ENCODE measurements at regions of chr2 and their contacts with region 1.

Region 1: DNA sequence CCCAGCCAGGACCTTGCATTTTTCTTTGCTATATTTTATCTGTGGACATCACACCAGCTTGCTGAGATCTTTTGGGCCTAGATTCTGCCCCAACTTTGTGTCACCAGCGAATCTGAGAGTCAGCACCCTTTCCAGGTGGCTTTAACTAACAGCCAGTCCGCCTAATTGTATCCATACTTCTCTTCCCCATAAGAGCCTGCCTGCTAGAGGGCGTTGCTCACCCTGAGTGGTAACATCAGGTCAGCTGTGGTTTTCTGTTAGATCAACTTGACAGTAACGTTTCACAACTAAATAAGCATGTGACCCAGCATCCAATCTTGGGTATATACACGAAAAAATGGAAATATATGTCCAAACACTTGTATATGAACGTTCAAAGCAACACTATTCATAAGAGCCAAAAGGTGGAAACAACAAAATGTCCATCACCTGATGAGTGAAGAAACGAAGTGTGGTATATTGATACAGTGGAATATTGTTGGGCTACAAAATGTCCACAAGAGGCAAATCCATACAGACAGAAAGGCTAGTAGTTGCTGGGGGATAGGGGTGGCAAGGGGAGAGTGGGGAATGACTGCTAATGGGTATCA is 24.9 kb downstream of the EFHD1 start:
- DNase-seq: no peak
- ATAC-seq: no peak
- H3K4me3 ChIP-seq: no peak overlapping the region
- H3K27ac ChIP-seq: 0 out of 2 replicates have a peak overlapping the region, but pooled peaks have one; percentile 46
- H3K4me1 ChIP-seq: peaks cover 22% of the 10 kb centered on the region
- H3K27me3 ChIP-seq: no peaks in the 10 kb centered on the region
- CTCF ChIP-seq: no peak

Region 2: GRCh38 chr2:232567721-232568120 is 90.6 kb before region 1 on chr2:
- CTCF ChIA-PET with region 1: no interaction called
- POLR2A ChIA-PET with region 1: interaction called, 14 read pairs
- in situ Hi-C with region 1: no loop called
- intact Hi-C with region 1: no loop called
- DNase-seq: no peak
- ATAC-seq: peak; percentile 43; the same call in 1 of the 2 replicates
- H3K4me3 ChIP-seq: no peak overlapping the region
- H3K27ac ChIP-seq: no peak overlapping the region
- H3K4me1 ChIP-seq: no peaks in the 10 kb centered on the region
- H3K27me3 ChIP-seq: no peaks in the 10 kb centered on the region
- CTCF ChIP-seq: no peak

Region 3: GRCh38 chr2:232632908-232633732 is 25.2 kb before region 1 on chr2 and contains the start of gene EFHD1:
- CTCF ChIA-PET with region 1: no interaction called
- POLR2A ChIA-PET with region 1: interaction called, 15 read pairs
- in situ Hi-C with region 1: no loop called
- intact Hi-C with region 1: no loop called
- DNase-seq: no peak
- ATAC-seq: peak; percentile 97
- H3K4me3 ChIP-seq: peak within 1 kb of the TSS; percentile 59 to 63
- H3K27ac ChIP-seq: peak within 1 kb of the TSS; percentile 66
- H3K4me1 ChIP-seq: peaks cover 13% of the 10 kb centered on the region
- H3K27me3 ChIP-seq: no peaks in the 10 kb centered on the region
- CTCF ChIP-seq: no peak; the same call in 1 of the 2 replicates
- total RNA-seq, gene EFHD1: 73.5 TPM